OCI-LY7 (cell line): ENCODE measurements at regions of chr6 and their contacts with region 1.

Region 1: DNA sequence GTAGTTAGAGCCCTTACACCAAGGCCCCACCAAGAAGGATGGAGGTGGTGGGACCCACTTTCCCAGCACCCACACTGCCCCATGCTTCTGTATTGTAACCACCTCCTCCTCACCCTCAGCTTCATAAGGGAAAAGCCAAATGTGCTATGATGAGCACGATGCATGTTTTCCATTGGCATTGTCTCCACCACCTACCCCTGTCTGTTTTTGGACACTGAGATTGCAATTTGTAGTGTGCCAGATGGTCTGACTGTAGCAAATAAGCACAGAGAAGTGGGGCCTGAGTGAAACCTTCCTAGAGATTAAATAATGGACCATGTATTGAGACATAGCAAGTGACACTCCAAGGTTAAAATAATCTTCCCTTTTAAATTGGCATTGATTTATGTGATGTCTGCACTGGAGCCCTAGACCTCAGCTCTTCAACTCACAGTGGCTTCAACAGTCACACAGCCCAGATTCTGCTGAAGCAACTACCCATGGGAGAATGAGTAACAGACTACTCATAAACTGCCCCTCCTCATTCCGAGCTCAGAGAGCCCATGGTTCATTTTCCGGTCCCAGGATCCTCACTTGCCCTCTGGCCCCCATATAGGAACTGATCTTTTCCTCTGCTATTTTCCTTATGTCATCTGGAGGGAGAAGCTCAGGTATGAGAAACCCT is 177.9 kb downstream of the COL9A1 start:
- DNase-seq: no peak
- H3K4me3 ChIP-seq: no peak overlapping the region
- H3K27ac ChIP-seq: no peak overlapping the region
- H3K4me1 ChIP-seq: no peaks in the 10 kb centered on the region
- CTCF ChIP-seq: no peak

Region 2: DNA sequence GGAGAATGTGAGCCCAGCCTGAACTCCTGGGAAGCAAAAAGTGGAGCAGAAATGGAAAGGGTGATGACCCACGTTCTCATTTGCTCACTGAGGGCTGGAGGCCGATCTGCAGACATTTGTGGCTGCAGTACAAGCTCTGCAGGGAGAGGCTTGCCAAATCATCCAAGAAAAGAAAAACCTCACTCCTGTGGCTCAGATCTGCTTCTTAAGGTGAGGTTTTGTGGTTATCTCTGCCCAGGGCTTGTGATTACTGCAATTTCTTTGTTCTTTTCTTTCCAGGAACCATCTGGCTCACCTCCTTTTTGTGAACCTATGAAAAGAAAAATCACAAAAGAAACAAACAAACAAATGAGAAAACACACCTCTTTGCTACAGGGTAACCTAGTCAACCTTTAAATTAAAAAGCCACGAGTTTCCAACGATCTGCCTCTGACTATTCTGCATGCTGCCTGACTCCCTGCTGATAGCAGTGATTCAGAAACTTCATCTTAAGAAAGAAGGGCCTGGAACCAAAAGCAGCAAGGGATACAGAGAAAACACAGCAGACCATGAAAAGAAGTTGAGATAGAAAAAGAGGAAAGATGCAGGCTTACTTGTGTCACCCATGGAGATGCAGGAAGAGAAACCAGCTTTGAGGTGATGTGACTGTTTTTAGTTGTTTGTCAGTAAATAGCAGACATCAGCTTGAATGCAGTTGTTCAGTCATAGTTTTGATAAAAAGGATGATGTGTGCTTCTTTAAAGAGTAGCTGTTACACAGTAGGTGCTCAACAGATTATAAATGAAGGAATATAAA is 493.3 kb before region 1 on chr6:
- CTCF ChIA-PET with region 1: no interaction called
- POLR2A ChIA-PET with region 1: no interaction called
- intact Hi-C with region 1: loop called (anchors 10 kb)
- DNase-seq: no peak
- H3K4me3 ChIP-seq: no peak overlapping the region
- H3K27ac ChIP-seq: no peak overlapping the region
- H3K4me1 ChIP-seq: no peaks in the 10 kb centered on the region
- CTCF ChIP-seq: no peak

Region 3: GRCh38 chr6:70166088-70166958 is 41.3 kb after region 1 on chr6:
- CTCF ChIA-PET with region 1: no interaction called
- POLR2A ChIA-PET with region 1: no interaction called
- intact Hi-C with region 1: no loop called
- DNase-seq: peak; percentile 5
- H3K4me3 ChIP-seq: no peak overlapping the region
- H3K27ac ChIP-seq: no peak overlapping the region
- H3K4me1 ChIP-seq: no peaks in the 10 kb centered on the region
- CTCF ChIP-seq: peak; percentile 60

Region 4: DNA sequence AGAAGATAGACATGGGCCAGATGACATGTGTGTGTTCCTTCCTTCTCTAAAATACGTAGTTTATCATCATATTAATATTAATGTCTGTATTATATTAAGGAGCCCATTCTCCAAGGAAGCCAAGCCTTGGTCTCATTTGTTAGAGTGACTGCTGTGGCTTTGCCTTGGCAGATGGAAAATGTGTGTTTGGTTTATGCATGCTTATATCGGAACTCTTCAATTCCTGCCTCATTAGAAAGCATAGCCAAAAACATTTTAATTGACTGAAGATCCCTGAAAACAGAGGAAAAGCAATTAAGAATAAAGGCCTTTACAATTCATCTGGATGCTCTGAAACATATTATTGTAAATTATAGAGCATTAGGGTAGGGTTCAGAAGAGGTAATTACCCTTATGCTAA is 71.5 kb after region 1 on chr6:
- CTCF ChIA-PET with region 1: no interaction called
- POLR2A ChIA-PET with region 1: no interaction called
- intact Hi-C with region 1: no loop called
- DNase-seq: no peak
- H3K4me3 ChIP-seq: no peak overlapping the region
- H3K27ac ChIP-seq: no peak overlapping the region
- H3K4me1 ChIP-seq: no peaks in the 10 kb centered on the region
- CTCF ChIP-seq: no peak

Region 5: GRCh38 chr6:70236343-70236742 is 111.3 kb after region 1 on chr6:
- CTCF ChIA-PET with region 1: no interaction called
- POLR2A ChIA-PET with region 1: interaction called, 11 read pairs
- intact Hi-C with region 1: no loop called
- DNase-seq: no peak
- H3K4me3 ChIP-seq: no peak overlapping the region
- H3K27ac ChIP-seq: no peak overlapping the region
- H3K4me1 ChIP-seq: no peaks in the 10 kb centered on the region
- CTCF ChIP-seq: no peak

Region 6: GRCh38 chr6:70380271-70380670 is 255.3 kb after region 1 on chr6:
- CTCF ChIA-PET with region 1: no interaction called
- POLR2A ChIA-PET with region 1: no interaction called
- intact Hi-C with region 1: no loop called
- DNase-seq: no peak
- H3K4me3 ChIP-seq: no peak overlapping the region
- H3K27ac ChIP-seq: no peak overlapping the region
- H3K4me1 ChIP-seq: no peaks in the 10 kb centered on the region
- CTCF ChIP-seq: no peak